ENCODE measurements at regions of chr22 and their contacts with region 1.

Region 1: GRCh38 chr22:44684506-44685383 is 17.3 kb upstream of the PRR5 start:
- DNase-seq: peak; percentile 80
- H3K4me3 Mint-ChIP-seq: peak overlapping the region; percentile 49
- H3K27ac Mint-ChIP-seq: peak overlapping the region; percentile 68
- H3K4me1 Mint-ChIP-seq: peaks cover 46% of the 10 kb centered on the region
- H3K27me3 Mint-ChIP-seq: peaks cover 1% of the 10 kb centered on the region

Region 2: DNA sequence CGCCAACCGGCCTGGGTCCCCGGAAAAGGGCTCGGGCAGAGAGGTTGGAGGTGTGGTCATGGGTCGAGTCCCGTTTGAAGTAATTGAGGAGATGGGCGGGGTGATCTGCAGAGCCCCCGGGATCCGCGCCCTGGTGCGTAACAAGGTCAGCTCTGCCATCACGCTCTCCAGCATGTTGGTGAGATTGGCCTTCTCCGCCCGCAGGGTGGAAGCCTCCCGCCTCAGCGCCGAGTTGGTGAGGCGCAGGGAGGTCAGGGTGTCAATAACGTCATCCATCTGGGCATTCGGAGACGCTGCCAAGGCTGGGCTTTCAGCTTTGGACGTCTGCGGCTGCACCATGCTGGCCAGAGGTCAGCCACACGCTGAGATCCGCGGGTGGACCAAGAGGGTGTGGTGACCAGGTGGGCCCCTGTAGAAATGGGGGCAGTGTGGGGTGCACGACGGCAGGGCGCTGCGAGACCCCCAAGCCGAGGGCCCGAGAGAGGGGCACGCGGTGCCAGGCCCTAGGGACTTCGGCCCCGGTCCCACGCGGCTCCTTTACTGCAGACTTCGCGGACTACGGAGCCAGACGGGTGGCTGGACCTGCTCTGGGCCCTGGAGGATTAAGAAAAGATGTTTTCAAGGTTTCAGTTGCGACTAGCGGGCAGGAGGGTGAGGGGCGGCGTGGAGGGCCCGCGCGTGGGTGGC is 187.4 kb before region 1 on chr22:
- intact Hi-C with region 1: loop called (anchors 1 kb)
- DNase-seq: no peak
- H3K4me3 Mint-ChIP-seq: peak overlapping the region; percentile 81
- H3K27ac Mint-ChIP-seq: no peak overlapping the region
- H3K4me1 Mint-ChIP-seq: peaks cover 30% of the 10 kb centered on the region
- H3K27me3 Mint-ChIP-seq: no peaks in the 10 kb centered on the region

Region 3: DNA sequence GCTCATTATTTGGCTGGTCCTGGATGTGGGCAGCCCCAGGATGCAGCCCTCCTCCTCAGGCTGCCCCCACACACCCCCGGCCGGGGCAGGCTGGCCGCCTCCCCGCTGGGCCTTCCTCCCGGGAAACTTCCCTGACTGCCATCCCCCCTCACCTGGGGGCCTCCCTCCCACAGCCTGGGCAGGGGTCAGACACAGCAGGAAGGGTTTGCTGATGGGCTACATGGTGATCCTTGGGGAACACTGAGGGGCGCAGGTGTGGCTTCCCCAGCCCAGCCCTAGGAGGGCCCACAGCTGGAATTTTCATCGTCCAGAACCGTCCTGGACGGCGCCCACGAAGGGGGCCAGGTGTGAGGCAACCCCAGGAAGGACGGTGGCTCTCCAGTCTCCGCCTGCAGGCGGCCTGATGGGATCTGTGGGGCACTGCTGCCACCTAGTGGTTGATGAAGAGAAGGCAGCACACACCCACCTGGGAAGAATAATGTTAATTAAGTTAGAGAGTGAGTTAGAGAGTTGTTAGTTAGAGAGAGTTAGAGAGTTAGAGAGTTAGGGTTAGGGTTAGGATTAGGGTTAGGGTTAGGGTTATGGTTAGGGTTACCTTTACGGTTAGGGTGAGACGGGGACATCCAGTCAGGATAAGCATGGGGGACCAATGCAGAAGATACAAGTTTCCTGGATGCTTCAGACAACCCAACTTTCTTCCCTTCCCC is 58.6 kb before region 1 on chr22:
- intact Hi-C with region 1: loop called (anchors 1 kb)
- DNase-seq: peak; percentile 70
- H3K4me3 Mint-ChIP-seq: no peak overlapping the region
- H3K27ac Mint-ChIP-seq: no peak overlapping the region
- H3K4me1 Mint-ChIP-seq: no peaks in the 10 kb centered on the region
- H3K27me3 Mint-ChIP-seq: peaks cover 7% of the 10 kb centered on the region

Region 4: DNA sequence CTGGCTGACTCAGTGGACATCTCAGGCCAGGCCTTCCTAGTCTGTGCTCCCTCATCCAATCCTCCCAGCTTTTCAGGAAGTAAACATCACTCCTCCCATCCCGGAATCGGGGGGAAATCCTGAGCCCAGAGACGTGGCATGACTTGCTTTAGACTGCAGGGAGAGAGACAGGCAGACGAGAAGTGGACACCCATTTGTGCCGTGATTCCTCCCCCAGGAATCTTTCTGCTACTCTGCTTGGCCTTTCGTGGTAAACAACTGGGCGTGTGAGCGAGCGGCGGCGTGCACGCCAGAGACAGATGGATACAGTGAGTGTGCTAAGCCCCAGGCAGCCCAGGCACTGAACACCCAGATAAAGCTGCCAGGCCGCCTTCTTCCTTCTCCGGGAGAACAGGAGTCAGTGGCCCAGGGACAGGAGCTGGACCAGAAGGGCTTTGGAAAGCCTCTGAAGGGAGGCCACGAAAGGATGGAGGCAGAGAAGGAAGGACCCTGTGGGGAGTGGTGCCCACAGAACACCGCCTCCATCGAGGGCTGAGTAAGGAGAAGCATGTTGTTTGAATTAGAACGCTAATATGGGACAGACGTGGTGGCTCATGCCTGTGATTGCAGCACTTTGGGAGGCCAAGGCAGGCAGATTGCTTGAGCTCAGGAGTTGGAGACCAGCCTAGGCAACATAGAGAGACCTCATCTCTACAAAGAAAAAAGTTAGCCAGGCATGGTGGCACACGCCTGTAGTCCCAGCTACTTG is 35.8 kb before region 1 on chr22:
- intact Hi-C with region 1: loop called (anchors 1 kb)
- DNase-seq: no peak
- H3K4me3 Mint-ChIP-seq: no peak overlapping the region
- H3K27ac Mint-ChIP-seq: no peak overlapping the region
- H3K4me1 Mint-ChIP-seq: no peaks in the 10 kb centered on the region
- H3K27me3 Mint-ChIP-seq: peaks cover 27% of the 10 kb centered on the region

Region 5: GRCh38 chr22:44668190-44668885 is 16.4 kb before region 1 on chr22:
- intact Hi-C with region 1: loop called (anchors 1 kb)
- DNase-seq: peak; percentile 41
- H3K4me3 Mint-ChIP-seq: peak overlapping the region; percentile 83
- H3K27ac Mint-ChIP-seq: peak overlapping the region; percentile 85
- H3K4me1 Mint-ChIP-seq: peaks cover 57% of the 10 kb centered on the region
- H3K27me3 Mint-ChIP-seq: peaks cover 16% of the 10 kb centered on the region

Region 6: GRCh38 chr22:44701824-44702478 is 17.2 kb after region 1 on chr22 and contains the start of gene PRR5:
- intact Hi-C with region 1: loop called (anchors 1 kb)
- DNase-seq: peak; percentile 78
- H3K4me3 Mint-ChIP-seq: peak within 1 kb of the TSS; percentile 72
- H3K27ac Mint-ChIP-seq: peak within 1 kb of the TSS; percentile 40
- H3K4me1 Mint-ChIP-seq: no peaks in the 10 kb centered on the region
- H3K27me3 Mint-ChIP-seq: peaks cover 6% of the 10 kb centered on the region
- total RNA-seq, gene PRR5: 19.7 and 21.6 TPM in 2 replicates

Region 7: GRCh38 chr22:44712232-44712555 is 27.4 kb after region 1 on chr22:
- intact Hi-C with region 1: no loop called
- DNase-seq: no peak
- H3K4me3 Mint-ChIP-seq: no peak overlapping the region
- H3K27ac Mint-ChIP-seq: no peak overlapping the region
- H3K4me1 Mint-ChIP-seq: peaks cover 4% of the 10 kb centered on the region
- H3K27me3 Mint-ChIP-seq: no peaks in the 10 kb centered on the region

Region 8: GRCh38 chr22:45163451-45164269 is 478.9 kb after region 1 on chr22 and contains the start of gene NUP50:
- intact Hi-C with region 1: loop called (anchors 10 kb)
- DNase-seq: peak; percentile 96
- H3K4me3 Mint-ChIP-seq: peak within 1 kb of the TSS; percentile 98
- H3K27ac Mint-ChIP-seq: peak within 1 kb of the TSS; percentile 90
- H3K4me1 Mint-ChIP-seq: peaks cover 48% of the 10 kb centered on the region
- H3K27me3 Mint-ChIP-seq: no peaks in the 10 kb centered on the region
- total RNA-seq, gene NUP50: 156 and 164 TPM in 2 replicates

Measured in activated T-helper 1 cell treated with anti-CD3 and anti-CD28 coated beads, Interleukin-12 subunit alpha, Interleukin-12 subunit beta, Interleukin-2, Interleukin-4 antibody, amounts not matched to agents 30 ng/mL and 10 ng/mL and 1 ng/mL, durations not matched to agents 14 hours and 24 hours and 36 hours (primary cell).